ENCODE measurements at regions of chr3 and their contacts with region 1.

Region 1: DNA sequence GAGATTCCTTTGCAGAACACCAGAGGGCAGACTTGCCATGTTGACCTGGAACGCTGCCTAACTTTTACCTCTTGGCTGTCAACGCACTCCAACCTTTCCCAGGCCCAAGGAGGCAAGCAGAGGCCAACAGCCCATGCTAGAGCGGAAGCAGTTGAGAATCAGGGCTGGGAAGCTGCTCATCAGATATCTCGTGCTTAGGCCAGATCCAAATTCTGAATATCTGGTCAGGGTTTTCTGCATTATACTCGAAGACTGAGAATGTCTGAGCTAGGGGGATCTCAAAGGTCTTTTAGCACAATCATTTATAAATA is 2.5 kb downstream of the XIRP1 start:
- DNase-seq: peak; percentile 79
- H3K4me3 ChIP-seq: no peak overlapping the region
- H3K27ac ChIP-seq: no peak overlapping the region
- H3K4me1 ChIP-seq: peaks cover 0 to 2% of the 10 kb centered on the region in 2 experiments; a peak in 1 of 4 replicates
- H3K27me3 ChIP-seq: no peaks in the 10 kb centered on the region
- CTCF ChIP-seq: peak; percentile 77
- EP300 ChIP-seq: no peak
- RAD21 ChIP-seq: peak; percentile 85

Region 2: DNA sequence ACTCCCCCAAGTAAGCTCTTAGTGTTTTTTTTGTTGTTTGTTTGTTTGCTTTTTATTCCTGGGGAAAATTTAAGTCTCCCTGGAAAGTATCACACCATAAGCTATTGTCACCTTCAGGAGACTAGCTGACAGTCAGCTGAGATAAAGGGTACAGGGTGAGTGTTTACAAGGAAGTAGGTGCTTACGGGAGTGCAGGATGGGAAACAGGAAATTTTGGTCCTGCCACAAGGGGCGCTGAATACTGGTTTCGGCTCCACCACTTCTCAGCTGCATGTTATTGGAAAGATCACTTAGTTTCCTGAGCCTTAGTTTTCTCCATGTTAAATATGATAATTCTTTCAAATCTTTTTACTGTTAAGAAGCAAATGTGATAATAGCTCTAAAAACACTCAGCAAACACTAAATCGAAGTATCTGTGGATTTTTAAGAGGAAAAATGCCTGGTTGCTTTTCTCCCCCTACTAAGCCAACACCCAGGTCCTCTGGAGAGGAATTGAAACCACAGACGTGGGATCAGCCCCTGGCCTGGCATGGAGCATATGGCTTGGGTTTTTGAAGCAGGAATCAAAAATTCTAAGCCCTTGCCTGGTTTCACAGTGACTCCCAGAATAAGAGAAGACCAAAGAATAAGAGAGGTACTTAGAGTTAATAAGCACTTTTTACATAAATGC is 228.8 kb before region 1 on chr3:
- CTCF ChIA-PET with region 1: no interaction called
- POLR2A ChIA-PET with region 1: no interaction called
- DNase-seq: peak; percentile 56
- H3K4me3 ChIP-seq: no peak overlapping the region; a peak in 1 of 4 replicates
- H3K27ac ChIP-seq: no peak overlapping the region
- H3K4me1 ChIP-seq: peaks cover 0 to 9% of the 10 kb centered on the region in 2 experiments; a peak in 1 of 4 replicates
- H3K27me3 ChIP-seq: no peaks in the 10 kb centered on the region
- CTCF ChIP-seq: peak; percentile 72
- EP300 ChIP-seq: no peak
- RAD21 ChIP-seq: peak; percentile 42

Region 3: GRCh38 chr3:39126532-39127071 is 63.3 kb before region 1 on chr3:
- CTCF ChIA-PET with region 1: interaction called, 59 read pairs
- POLR2A ChIA-PET with region 1: no interaction called
- DNase-seq: peak; percentile 52
- H3K4me3 ChIP-seq: no peak overlapping the region; a peak in 1 of 4 replicates
- H3K27ac ChIP-seq: no peak overlapping the region
- H3K4me1 ChIP-seq: 0 out of 4 replicates have a peak, but pooled peaks cover 0 to 6% of the 10 kb centered on the region in 2 experiments
- H3K27me3 ChIP-seq: no peaks in the 10 kb centered on the region
- CTCF ChIP-seq: peak; percentile 74
- EP300 ChIP-seq: no peak
- RAD21 ChIP-seq: peak; percentile 80

Region 4: DNA sequence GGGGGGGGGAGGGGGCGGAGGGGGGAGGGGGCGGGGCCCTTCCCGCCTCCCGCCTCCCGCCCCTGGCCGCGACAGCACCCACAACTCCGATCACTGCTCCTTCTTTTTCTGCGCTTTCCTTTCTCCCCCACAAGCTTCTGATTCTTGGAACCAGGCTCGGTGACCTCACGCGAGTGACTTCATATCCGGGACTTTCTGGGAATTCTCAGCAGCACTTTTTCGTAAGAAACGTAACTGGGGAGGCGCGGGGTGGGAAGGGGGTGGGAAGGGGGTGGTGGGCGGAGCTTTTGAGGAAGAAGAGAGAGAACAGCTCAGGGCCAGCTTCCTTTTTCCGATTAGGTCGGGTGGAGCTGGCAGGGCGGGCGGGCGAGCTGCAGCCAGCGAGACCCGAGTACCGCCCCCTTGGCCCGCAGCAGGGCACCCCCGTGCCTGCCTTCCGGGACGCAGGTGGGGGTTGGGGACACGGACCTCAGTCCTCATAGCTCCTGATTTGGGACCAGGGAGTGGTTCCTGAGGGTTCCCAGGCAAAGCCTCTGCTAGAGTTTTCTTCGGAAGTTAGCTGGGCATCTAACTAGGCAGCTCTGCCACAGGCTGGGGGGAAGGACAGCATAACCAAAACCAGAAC is 12.1 kb before region 1 on chr3:
- CTCF ChIA-PET with region 1: interaction called, 29 read pairs
- POLR2A ChIA-PET with region 1: interaction called, 3 read pairs
- DNase-seq: peak; percentile 88
- H3K4me3 ChIP-seq: peak overlapping the region; percentile 49 to 61; a peak in 3 of 4 replicates
- H3K27ac ChIP-seq: peak overlapping the region; percentile 79 to 86
- H3K4me1 ChIP-seq: peaks cover 7 to 25% of the 10 kb centered on the region in 2 experiments; a peak in 3 of 4 replicates
- H3K27me3 ChIP-seq: no peaks in the 10 kb centered on the region
- CTCF ChIP-seq: no peak
- EP300 ChIP-seq: no peak
- RAD21 ChIP-seq: no peak

Region 5: GRCh38 chr3:39202094-39202493 is 12.2 kb after region 1 on chr3:
- CTCF ChIA-PET with region 1: interaction called, 11 read pairs
- POLR2A ChIA-PET with region 1: no interaction called
- DNase-seq: no peak
- H3K4me3 ChIP-seq: no peak overlapping the region
- H3K27ac ChIP-seq: no peak overlapping the region
- H3K4me1 ChIP-seq: no peaks in the 10 kb centered on the region
- H3K27me3 ChIP-seq: peaks cover 28% of the 10 kb centered on the region; the same call in 1 of the 2 replicates
- CTCF ChIP-seq: no peak
- EP300 ChIP-seq: no peak
- RAD21 ChIP-seq: no peak

Region 6: DNA sequence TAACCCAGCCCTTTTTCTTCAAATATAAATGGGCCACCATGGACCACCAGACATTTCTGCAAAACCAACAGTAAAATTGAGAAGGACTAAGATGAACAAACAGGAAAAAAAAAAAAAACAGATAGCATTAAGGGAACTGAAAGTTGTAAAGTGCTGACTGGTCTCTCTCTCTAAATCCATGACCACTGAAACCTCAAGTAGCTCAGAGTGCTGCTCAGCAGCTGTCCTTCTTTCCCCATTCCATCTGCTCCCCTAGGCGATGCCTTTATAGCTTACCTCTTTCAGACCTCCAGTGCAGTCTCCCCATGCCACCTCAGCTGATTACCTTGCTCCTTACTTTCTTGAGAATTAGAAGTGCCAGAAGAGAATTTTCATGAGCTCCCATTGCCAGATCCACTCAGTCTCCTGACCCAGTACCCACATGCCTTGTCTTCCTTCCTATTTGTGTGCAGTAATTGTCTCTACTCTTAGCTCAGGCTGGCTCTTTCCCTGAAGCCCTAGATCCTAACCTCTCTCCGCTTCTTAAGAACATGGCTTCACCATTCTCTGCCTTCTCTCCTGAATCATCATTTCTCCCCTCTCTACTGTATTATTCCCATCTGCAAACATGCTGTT is 26.4 kb after region 1 on chr3:
- CTCF ChIA-PET with region 1: interaction called, 10 read pairs
- POLR2A ChIA-PET with region 1: no interaction called
- DNase-seq: no peak
- H3K4me3 ChIP-seq: no peak overlapping the region
- H3K27ac ChIP-seq: no peak overlapping the region
- H3K4me1 ChIP-seq: no peaks in the 10 kb centered on the region
- H3K27me3 ChIP-seq: peaks cover 14% of the 10 kb centered on the region; the same call in 1 of the 2 replicates
- CTCF ChIP-seq: no peak
- EP300 ChIP-seq: no peak
- RAD21 ChIP-seq: no peak

Region 7: GRCh38 chr3:39279745-39280517 is 90.0 kb after region 1 on chr3 and contains the start of gene CX3CR1:
- CTCF ChIA-PET with region 1: interaction called, 510 read pairs
- POLR2A ChIA-PET with region 1: interaction called, 3 read pairs
- DNase-seq: no peak
- H3K4me3 ChIP-seq: no peak within 1 kb of the TSS
- H3K27ac ChIP-seq: no peak within 1 kb of the TSS
- H3K4me1 ChIP-seq: no peaks in the 10 kb centered on the region
- H3K27me3 ChIP-seq: peaks cover 8% of the 10 kb centered on the region; the same call in 1 of the 2 replicates
- CTCF ChIP-seq: no peak
- EP300 ChIP-seq: no peak
- RAD21 ChIP-seq: no peak
- polyA plus RNA-seq, gene CX3CR1: not detected in 2 replicates

Region 8: GRCh38 chr3:39378088-39378487 is 188.2 kb after region 1 on chr3:
- CTCF ChIA-PET with region 1: interaction called, 21 read pairs
- POLR2A ChIA-PET with region 1: no interaction called
- DNase-seq: peak; percentile 55
- H3K4me3 ChIP-seq: no peak overlapping the region
- H3K27ac ChIP-seq: no peak overlapping the region
- H3K4me1 ChIP-seq: no peaks in the 10 kb centered on the region; a peak in 1 of 4 replicates
- H3K27me3 ChIP-seq: no peaks in the 10 kb centered on the region
- CTCF ChIP-seq: peak; percentile 63
- EP300 ChIP-seq: no peak
- RAD21 ChIP-seq: peak; percentile 52